Head of caudate nucleus (tissue), 42 donors: ENCODE measurements at regions of chr2 and their contacts with region 1.

Region 1: GRCh38 chr2:112481050-112481527 is 867 bp upstream of the TTL start:
- DNase-seq: peak; percentile 76 to 96 (median 91)

Region 2: GRCh38 chr2:112254466-112255239 is 226.4 kb before region 1 on chr2 and contains the start of gene ZC3H8:
- intact Hi-C with region 1: loop called (anchors 10 kb)
- DNase-seq: peak; percentile 85 to 98 (median 94)

Region 3: DNA sequence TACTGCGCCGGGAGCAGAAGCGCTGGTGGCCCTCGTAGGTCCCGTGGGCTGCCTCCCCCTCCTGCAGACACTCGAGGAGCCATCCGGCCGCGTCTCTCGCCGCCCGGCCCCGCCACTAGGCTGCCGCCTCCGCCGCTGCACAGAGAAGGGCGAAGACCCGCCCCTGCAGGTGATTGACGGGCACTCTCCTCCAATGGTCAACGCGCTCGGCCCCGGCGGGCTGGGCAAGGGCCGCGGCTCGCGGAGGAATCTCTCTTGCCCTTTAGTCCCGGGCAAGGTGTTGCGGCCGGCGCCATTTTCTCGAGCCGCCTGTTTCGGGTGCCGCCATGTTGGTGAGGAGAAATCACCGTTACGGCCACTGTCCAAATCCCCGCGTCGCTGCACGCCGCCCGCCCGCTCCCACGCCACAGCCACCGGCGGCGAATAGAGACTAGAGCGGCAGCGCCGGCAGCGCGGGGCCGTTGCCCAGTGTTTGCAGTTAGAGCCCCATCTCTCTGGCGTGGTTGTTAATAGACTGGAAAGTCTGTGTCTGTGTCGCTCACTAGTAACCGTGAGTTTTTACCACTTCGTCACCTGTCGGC is 205.7 kb before region 1 on chr2 and contains the start of gene ZC3H6:
- intact Hi-C with region 1: loop called (anchors 5 kb)
- DNase-seq: peak; percentile 97 to 100 (median 100)

Region 4: GRCh38 chr2:112321375-112322320 is 159.4 kb before region 1 on chr2:
- intact Hi-C with region 1: no loop called
- DNase-seq: no peak

Region 5: GRCh38 chr2:112454586-112454985 is 26.5 kb before region 1 on chr2:
- intact Hi-C with region 1: no loop called
- DNase-seq: no peak

Region 6: DNA sequence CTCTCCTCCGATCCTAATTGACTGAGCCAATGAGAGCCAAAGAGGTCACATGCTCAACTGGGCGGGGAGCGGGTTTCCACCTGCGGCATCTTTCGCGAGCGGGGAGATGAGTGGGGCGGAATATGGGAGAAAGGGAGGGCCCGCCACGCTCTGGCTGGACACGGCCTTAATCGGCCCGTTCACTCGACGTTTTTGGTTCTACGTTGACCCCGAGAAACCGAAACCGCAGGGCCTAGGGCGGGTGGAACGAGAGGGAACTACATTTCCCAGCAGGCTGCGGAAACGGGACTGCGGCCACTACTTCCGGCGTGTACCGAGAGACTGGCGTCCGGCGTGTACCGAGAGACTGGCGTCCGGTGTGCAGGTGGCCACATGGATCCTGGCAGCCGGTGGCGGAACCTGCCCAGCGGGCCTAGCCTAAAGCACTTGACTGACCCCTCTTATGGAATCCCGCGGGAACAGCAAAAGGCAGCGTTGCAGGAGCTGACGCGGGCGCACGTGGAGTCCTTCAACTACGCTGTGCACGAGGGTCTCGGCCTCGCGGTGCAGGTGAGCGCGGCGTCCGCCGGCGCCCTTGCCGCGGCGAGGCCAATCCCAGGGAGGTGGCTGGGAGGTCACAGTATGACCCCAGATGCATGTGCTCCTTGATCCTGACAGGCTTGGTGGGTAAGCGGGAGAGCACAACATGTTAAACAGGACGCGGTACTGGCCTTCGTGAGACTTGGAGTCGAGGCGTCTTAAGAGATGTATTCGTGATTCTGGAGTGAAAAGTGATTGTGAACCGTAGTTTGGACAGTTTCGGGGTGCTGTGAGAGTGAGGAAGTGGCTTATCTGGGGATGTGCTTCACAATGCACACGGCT is 61.3 kb after region 1 on chr2 and contains the start of gene POLR1B:
- intact Hi-C with region 1: loop called (anchors 5 kb)
- DNase-seq: peak; percentile 79 to 95 (median 89)

Region 7: GRCh38 chr2:112584134-112584890 is 103.2 kb after region 1 on chr2 and contains the start of gene CHCHD5:
- intact Hi-C with region 1: loop called (anchors 1 kb)
- DNase-seq: peak; percentile 90 to 98 (median 96)

Region 8: GRCh38 chr2:112645310-112646101 is 164.4 kb after region 1 on chr2 and contains the start of gene SLC20A1:
- intact Hi-C with region 1: loop called (anchors 5 kb)
- DNase-seq: peak; percentile 90 to 100 (median 99)